Activated naive CD4-positive, alpha-beta T cell treated with anti-CD3 and anti-CD28 coated beads, Interleukin-2, amount 10 ng/mL, durations not matched to agents 7 days and 5 days (primary cell): ENCODE measurements at regions of chr11 and their contacts with region 1.

Region 1: DNA sequence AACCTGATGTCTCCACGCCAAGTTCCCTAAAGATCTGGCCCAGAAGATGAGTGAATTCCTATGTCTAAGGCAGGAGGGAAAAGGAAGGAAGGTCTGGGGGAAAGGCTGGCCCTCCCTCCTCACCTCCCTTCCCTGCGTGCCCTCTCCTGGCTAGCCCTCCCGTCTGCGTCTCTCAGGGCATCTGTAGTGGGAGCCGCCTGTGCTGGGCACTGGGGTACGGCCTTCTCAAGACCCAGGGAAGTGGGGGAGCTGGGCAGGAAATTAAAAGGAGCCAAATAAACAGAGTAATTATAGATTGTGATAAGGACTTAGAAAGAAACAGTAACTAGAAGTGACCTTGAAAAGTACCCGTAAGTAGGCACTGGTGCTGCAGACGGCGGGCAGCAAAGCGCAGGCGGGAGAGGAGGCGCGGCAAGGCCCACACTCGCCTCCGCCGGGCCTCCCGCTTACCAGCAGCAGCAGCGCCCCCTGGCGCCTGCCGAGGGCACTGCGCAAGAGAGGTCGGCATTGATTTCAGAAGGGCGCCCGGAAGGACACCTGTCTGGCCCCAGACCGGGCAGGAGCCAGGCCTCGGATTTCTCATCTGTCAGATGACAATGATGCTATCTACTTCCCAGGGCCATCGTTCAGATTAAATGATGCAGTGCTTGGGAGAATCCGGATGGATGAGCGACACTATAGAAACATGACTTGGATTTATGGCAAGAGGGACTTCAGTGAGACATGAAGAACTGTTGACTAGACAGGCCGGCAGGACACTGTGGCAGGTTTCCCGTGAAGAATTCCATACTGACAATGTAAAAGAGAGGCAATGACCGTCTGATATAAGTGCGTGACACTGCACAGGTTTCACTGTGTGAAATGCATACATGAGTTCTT is 7.3 kb downstream of the KCNJ1 start:
- DNase-seq: peak; percentile 81
- H3K4me3 Mint-ChIP-seq: no peak overlapping the region
- H3K27ac Mint-ChIP-seq: no peak overlapping the region
- H3K4me1 Mint-ChIP-seq: peaks cover 8% of the 10 kb centered on the region
- H3K27me3 Mint-ChIP-seq: peaks cover 61% of the 10 kb centered on the region

Region 2: DNA sequence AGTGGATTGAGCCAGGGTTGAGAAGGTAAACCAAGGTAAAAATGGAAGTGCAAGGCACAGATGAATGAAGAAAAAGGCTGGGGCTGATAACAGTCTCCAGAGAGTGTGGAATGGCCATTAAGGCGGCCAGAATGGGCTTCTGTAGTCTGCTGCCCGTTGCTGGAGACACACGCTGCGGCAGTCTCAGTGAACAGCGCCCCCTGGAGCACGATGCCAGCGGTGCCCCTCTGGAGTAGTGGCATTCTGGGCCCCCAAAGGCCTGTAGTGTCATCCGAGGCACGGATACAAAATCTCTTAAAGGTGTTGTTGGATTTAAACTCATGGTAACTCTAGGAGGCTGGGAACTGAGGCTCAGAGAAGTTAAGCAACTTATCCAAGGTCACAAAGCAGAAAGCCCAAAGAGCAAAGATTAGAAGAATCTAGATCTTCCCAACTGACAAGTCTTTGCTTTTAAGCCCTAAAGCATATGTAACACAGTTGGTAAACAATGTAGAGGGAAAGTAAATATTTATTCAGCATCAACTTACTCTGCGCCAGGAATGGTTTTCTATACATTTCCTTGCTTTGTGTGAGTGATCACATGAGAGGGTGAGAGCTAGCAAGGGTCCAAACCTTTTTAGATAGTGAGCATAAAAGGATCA is 10.9 kb before region 1 on chr11:
- CTCF ChIA-PET with region 1: interaction called, 44 read pairs
- DNase-seq: peak; percentile 71
- H3K4me3 Mint-ChIP-seq: no peak overlapping the region
- H3K27ac Mint-ChIP-seq: no peak overlapping the region
- H3K4me1 Mint-ChIP-seq: peaks cover 31% of the 10 kb centered on the region
- H3K27me3 Mint-ChIP-seq: peaks cover 7% of the 10 kb centered on the region